Activated CD8-positive, alpha-beta T cell treated with anti-CD3 and anti-CD28 coated beads, Interleukin-2, amount 10 ng/mL, durations not matched to agents 7 days and 5 days (primary cell): ENCODE measurements at regions of chr11 and their contacts with region 1.

Region 1: GRCh38 chr11:72066855-72067254 is 13.5 kb downstream of the NUMA1 start:
- DNase-seq: no peak
- ATAC-seq: no peak
- H3K4me3 Mint-ChIP-seq: no peak overlapping the region
- H3K27ac Mint-ChIP-seq: no peak overlapping the region
- H3K4me1 Mint-ChIP-seq: peaks cover 40% of the 10 kb centered on the region
- H3K27me3 Mint-ChIP-seq: no peaks in the 10 kb centered on the region

Region 2: DNA sequence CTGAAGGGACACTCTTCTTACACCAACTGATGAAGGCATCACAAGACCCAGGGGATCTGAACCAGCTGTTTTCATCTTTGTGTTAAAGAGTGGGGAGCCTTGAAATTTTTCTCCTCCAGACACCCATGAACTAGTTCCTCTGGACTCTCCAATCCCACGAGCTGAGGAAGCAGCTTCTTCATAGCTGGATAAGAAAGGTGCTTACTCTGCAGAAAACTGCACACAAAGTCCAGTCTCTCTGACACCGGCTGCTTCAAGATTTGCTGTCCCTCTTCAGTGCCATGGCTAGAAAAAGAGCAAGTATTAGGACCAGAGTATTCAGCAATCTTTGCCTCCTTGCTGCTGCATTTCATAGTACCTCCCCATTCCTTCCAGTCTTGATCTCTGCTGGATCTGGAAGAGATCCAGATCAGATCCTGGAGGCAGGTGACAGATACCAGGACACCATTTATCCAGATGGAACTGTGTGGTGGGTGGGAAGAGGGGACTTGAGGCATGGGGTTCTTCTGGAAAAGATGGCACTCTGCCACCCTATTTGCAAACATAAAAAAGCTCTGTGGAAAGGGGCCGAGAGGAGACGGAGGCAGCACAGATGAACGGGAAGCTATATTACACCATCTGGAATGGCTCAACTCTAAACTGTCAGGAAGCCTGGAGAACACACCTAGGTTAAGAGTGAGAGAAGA is 42.6 kb before region 1 on chr11:
- CTCF ChIA-PET with region 1: interaction called, 12 read pairs
- POLR2A ChIA-PET with region 1: interaction called, 3 read pairs
- DNase-seq: no peak
- ATAC-seq: no peak
- H3K4me3 Mint-ChIP-seq: no peak overlapping the region
- H3K27ac Mint-ChIP-seq: no peak overlapping the region
- H3K4me1 Mint-ChIP-seq: peaks cover 23% of the 10 kb centered on the region
- H3K27me3 Mint-ChIP-seq: no peaks in the 10 kb centered on the region

Region 3: GRCh38 chr11:72112321-72113219 is 45.7 kb after region 1 on chr11 and contains the start of gene ANAPC15:
- CTCF ChIA-PET with region 1: no interaction called
- POLR2A ChIA-PET with region 1: no interaction called
- DNase-seq: peak; percentile 100
- ATAC-seq: peak; percentile 93
- H3K4me3 Mint-ChIP-seq: peak within 1 kb of the TSS; percentile 95
- H3K27ac Mint-ChIP-seq: peak within 1 kb of the TSS; percentile 100
- H3K4me1 Mint-ChIP-seq: peaks cover 20% of the 10 kb centered on the region
- H3K27me3 Mint-ChIP-seq: no peaks in the 10 kb centered on the region
- total RNA-seq, gene ANAPC15: 62.9 to 69.5 TPM

Region 4: GRCh38 chr11:72179804-72180396 is 113.0 kb after region 1 on chr11:
- CTCF ChIA-PET with region 1: no interaction called
- POLR2A ChIA-PET with region 1: no interaction called
- DNase-seq: no peak
- ATAC-seq: no peak
- H3K4me3 Mint-ChIP-seq: no peak overlapping the region
- H3K27ac Mint-ChIP-seq: no peak overlapping the region
- H3K4me1 Mint-ChIP-seq: peaks cover 2% of the 10 kb centered on the region
- H3K27me3 Mint-ChIP-seq: peaks cover 20% of the 10 kb centered on the region